Right ventricle myocardium inferior (tissue), 1 donor: ENCODE measurements at regions of chr4 and their contacts with region 1.

Region 1: DNA sequence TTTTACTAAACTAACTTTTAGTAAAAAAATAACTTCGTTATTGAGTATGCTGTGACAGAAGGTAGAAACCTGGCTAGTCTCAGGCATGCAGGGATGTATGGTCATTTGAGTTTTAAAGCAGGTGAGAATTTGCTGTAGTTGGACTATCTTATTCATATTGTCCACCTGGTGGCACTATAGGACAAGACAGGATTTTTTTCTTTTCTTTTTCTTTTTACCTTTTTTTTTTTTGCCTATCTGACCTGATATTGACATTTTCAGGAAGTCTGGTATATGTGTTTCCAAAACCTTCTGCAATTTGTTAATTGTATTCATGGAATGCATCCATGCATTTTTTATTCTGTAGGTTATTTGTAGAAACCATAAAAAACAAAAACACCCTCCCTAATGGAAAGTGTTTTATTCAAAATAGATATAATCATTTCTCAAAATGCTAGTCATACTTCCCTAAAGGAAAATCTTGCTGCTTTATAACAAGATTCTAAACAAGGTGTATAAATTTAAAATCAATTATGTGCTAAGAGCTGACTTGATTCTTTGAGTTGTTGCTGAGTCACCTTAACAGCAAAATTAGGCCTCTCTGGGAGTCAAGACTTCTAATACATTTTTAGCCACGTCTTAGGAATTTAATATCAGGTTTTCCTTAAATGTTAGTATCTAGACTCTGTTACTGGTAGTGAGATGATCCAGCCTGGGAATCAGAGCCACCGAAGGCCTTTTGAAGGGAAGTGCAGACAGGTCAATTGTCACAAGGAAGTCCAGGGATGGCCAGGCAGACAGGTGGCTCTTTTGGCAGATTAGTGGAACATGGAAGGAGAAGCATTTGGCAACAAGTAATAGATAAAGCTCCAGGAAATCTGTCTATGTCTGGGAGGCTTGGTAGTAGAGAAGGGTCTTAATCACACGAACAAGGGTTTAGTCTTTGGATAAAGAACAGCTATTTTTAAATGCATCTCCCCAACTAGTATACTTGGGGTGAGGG is 201.3 kb upstream of the GNPDA2 start:
- DNase-seq: no peak
- ATAC-seq: no peak

Region 2: DNA sequence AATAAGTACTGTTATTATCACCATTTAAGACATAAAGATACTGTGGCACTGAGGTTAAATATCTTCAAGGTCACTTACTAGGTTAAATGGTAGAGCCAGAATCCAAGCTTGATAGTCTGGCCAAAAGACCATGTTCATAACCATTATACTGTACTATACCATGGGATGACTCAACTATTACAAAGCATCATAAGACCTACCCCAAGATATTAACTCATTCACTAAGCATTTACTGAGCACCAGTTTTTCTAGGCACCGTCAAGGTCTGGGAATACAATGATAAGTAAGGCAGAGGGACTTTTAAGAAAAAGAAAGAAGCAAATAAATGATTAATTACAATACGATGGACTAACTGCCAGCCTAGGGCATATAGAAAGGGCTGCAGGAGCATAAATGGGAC is 383.5 kb before region 1 on chr4:
- intact Hi-C with region 1: no loop called
- DNase-seq: no peak
- ATAC-seq: no peak

Region 3: DNA sequence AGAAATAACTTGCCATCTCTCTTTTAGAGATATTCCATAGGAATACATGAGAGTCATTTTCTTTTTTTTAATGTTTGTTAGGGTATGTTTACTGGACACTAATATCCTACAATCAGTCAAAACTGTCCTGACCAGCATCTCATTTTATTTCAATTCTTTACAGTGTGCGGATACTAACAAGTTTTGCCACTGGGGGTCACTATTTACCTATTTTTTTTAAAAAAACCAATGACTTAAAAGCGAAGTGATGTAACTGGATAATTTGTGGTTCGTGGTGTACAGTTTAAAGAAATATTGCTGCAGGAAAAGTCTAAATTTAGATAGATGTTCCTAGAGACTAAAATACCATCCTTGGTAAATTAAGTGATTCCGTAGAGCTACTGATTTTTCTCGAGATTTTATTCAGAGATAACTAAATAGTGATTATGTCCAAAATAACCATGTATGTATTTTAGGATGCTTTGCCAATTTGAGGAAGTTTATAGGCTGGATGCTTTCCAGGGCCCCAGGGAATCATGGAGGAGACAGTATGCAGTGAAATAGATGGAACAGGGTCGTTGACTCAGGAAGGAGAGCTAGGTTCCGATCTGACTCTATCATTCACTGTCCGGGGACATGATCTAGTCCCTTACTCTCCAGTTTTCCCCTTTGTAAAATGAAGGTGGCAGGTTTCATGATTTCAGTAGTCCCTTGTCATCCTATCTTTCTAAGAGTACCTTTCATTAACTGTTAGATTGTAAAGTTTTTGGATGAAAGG is 167.4 kb before region 1 on chr4:
- intact Hi-C with region 1: loop called (anchors 5 kb)
- DNase-seq: no peak
- ATAC-seq: peak; percentile 48

Region 4: DNA sequence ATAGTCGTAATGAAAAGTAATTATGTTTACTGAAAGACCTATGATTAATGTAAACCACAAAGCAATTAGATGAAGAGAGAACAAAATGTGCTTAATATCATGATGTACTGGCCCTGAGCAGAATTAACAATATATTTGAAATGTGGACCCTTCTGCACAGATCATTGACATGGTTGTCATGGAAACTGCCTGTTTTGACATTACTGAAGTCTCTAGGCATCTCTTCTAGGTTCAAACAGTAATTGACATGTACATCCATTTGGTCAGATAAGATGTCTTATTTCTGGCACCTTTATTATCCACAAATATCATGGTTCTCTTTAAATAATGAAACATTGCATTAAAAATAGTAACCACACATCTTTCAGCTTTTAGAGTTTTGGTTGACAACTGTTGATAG is 50.3 kb after region 1 on chr4:
- intact Hi-C with region 1: no loop called
- DNase-seq: no peak
- ATAC-seq: no peak

Region 5: GRCh38 chr4:45007508-45007907 is 79.8 kb after region 1 on chr4:
- intact Hi-C with region 1: no loop called
- DNase-seq: no peak
- ATAC-seq: peak; percentile 42

Region 6: DNA sequence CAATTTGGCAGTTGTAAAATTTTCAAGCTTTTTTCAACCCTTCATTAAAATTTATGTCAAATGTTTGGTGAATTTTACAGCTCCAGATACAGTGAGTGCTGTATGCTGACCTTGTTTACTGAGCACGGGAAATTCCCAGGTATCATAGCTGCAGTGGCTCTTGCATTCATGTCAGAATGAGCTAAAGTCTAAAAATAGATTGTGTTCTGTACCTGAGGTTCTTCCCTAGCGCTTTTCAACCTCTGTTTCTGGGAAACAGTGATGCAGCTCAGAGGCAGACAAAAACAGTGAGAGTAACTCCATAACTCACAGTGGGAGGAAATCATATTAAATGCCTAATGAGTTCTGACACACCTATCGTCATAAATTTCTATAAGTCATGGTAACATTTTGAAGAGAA is 192.5 kb after region 1 on chr4:
- intact Hi-C with region 1: loop called (anchors 5 kb)
- DNase-seq: no peak
- ATAC-seq: peak; percentile 91

Region 7: GRCh38 chr4:45331802-45332201 is 404.1 kb after region 1 on chr4:
- intact Hi-C with region 1: loop called (anchors 5 kb)
- DNase-seq: peak; percentile 37
- ATAC-seq: no peak

Region 8: DNA sequence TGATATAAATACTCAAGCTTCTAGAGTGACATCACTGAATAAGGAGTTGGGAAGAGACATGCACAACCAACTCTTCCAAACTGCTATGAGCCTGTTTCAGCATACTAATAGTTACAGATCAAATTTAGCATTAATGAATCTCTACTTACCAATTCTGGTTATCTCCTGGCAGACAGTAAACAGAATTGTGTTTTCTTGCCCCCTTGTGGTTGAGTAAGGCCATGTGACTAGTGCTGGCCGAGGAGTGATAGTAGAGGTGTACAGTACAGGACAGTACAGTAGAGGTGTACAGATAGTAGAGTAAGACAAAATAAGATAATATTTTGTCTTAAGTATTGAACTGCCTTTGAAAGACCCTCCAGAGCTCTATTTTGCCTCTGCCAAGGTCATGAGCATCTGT is 514.8 kb after region 1 on chr4:
- intact Hi-C with region 1: loop called (anchors 2 kb)
- DNase-seq: no peak
- ATAC-seq: peak; percentile 31

Region 9: DNA sequence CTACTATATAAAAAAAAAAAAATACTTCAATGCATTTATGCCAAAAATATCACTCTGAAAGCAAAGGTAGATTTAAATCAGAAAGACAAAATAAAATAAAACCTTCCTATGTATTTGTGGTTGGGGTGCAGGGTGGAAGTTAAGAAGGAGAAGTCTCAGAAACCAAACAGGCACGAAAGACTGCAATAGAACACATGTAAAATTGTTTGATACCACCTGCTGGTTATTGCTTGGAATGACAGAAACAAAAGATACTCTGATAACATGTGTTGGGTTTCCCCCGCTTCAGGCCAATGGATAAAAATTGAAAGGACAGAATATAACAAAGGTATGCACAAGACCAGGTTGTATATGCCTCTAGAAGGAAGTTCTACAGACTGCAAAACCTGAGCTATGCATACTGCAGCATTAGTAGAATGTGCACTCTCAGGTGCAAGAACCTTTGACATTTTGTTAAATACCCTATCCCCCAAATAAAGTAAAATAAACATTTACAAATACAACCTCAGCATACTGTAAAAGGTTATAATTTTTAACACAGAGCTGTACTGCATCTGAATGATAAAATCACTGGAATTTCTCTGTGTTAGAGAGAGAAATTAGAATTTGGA is 1343.4 kb after region 1 on chr4:
- intact Hi-C with region 1: loop called (anchors 5 kb)
- DNase-seq: no peak
- ATAC-seq: no peak